AG04450 (cell line): ENCODE measurements at regions of chr12 and their contacts with region 1.

Region 1: GRCh38 chr12:54379401-54380201 is 4.9 kb downstream of the ZNF385A start:
- DNase-seq: peak; percentile 34
- H3K4me3 ChIP-seq: peak overlapping the region; percentile 58
- H3K27ac ChIP-seq: no peak overlapping the region
- H3K27me3 ChIP-seq: no peaks in the 10 kb centered on the region
- CTCF ChIP-seq: peak; percentile 100

Region 2: DNA sequence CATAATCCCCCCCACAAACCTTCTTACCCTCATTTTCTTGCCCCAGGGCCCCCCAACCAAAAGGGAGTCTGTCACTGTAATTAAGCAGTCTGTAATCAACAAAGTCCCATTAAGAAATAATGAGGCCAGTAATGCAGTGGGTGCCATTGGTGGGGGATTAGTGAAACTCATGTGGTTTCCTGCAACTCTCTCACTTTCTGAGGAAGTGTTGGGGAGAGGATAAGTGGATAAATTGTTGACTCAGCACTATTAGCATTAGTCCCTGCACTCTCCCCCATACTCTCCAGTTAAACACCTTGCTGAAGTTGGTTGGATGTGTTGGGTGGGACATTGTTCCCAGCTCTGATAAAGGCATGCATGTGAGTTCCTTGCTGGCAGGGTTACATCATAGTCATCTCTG is 486.8 kb before region 1 on chr12:
- CTCF ChIA-PET with region 1: no interaction called
- POLR2A ChIA-PET with region 1: no interaction called
- DNase-seq: no peak
- H3K4me3 ChIP-seq: no peak overlapping the region
- H3K27ac ChIP-seq: no peak overlapping the region
- H3K27me3 ChIP-seq: peaks cover 2% of the 10 kb centered on the region
- CTCF ChIP-seq: no peak

Region 3: DNA sequence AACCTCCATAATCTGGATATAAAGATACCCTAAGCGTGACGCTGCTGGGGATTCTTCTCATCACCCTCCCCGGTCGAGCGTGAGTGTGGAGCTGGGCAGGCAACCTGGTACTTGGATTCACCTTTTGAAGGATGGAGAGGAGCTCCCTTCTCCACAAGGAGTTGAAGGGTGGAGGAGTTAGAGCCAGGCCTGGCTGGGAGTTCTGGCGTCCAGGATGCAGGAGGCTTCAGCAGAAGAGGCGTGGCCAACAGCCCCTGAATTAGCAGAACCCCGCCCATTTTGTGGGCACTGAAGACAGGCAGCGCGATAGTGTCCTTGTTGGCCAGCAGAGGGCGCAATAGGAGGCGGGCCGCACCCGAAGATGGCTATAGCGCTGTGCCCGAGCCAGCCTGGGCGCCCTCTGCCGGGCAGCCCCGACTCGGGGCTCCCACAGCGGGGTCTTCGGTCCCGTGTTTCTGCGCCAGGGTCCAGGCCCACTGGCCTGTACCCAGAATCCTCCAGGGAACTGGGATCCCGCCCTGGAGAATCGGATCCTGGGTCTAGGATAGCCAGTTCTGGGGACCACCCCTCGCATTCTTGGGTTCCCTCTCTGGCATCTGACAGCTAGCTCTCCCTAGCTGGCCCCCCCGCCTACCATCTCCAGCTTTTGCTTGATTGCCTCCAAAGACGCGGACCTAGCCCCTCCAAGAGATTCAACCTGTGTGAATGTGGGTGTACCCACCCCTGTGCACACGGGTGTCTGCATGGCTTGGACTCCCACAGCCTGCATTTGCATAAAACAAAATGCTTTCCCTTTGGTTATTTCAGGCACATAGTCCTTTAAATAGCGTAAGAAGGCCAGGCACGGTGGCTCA is 164.8 kb before region 1 on chr12:
- CTCF ChIA-PET with region 1: interaction called, 82 read pairs
- POLR2A ChIA-PET with region 1: no interaction called
- DNase-seq: peak; percentile 60
- H3K4me3 ChIP-seq: peak overlapping the region; percentile 39
- H3K27ac ChIP-seq: no peak overlapping the region
- H3K27me3 ChIP-seq: peaks cover 22% of the 10 kb centered on the region
- CTCF ChIP-seq: peak; percentile 94

Region 4: DNA sequence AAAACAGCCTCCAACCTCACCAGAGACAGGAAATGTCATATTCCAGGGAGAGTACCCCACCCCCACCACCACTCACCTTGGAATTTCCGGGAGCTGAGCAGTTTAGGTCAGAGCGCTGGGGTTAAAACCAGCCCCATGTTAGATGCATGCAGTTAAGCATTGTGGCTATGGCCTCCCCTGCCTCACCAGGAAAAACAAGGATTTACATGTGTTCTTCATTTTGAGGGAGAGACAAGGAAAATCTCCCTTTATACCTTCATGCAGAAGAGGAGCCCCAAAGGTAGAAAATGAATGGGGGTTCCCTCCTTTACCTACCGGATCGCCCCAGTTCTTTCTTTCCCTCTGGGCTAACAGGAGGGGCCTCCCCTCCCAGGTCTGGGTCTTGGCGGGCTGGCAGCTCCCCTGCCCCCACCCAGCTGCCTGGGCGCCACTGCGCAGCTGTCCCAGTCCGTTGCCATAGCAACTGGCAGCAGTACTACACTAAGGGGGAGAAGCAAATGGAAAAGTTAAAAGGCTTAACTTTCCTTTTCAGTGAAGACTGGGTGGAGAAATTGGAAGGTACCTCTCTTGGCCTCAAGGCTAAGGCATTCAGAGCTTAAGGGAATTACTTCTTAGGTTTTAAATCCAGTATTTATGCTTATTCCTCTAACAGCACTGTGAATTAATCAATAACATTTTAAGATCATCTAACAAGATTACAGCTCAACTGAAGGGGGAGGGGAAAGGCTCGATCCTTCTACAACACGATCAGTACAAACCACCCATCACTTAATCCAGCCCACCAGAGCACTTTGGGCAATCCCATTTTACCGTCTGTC is 120.2 kb before region 1 on chr12:
- CTCF ChIA-PET with region 1: interaction called, 26 read pairs
- POLR2A ChIA-PET with region 1: no interaction called
- DNase-seq: peak; percentile 63
- H3K4me3 ChIP-seq: peak overlapping the region; percentile 39
- H3K27ac ChIP-seq: peak overlapping the region; percentile 90
- H3K27me3 ChIP-seq: no peaks in the 10 kb centered on the region
- CTCF ChIP-seq: no peak

Region 5: GRCh38 chr12:54294152-54294952 is 85.2 kb before region 1 on chr12:
- CTCF ChIA-PET with region 1: interaction called, 16 read pairs
- POLR2A ChIA-PET with region 1: no interaction called
- DNase-seq: no peak
- H3K4me3 ChIP-seq: no peak overlapping the region
- H3K27ac ChIP-seq: no peak overlapping the region
- H3K27me3 ChIP-seq: peaks cover 13% of the 10 kb centered on the region
- CTCF ChIP-seq: peak; percentile 82

Region 6: GRCh38 chr12:54359033-54359761 is 20.4 kb before region 1 on chr12:
- CTCF ChIA-PET with region 1: interaction called, 24 read pairs
- POLR2A ChIA-PET with region 1: no interaction called
- DNase-seq: peak; percentile 99
- H3K4me3 ChIP-seq: peak overlapping the region; percentile 65
- H3K27ac ChIP-seq: peak overlapping the region; percentile 97
- H3K27me3 ChIP-seq: no peaks in the 10 kb centered on the region
- CTCF ChIP-seq: no peak

Region 7: GRCh38 chr12:54398995-54399793 is 19.6 kb after region 1 on chr12:
- CTCF ChIA-PET with region 1: interaction called, 212 read pairs
- POLR2A ChIA-PET with region 1: no interaction called
- DNase-seq: peak; percentile 61
- H3K4me3 ChIP-seq: no peak overlapping the region
- H3K27ac ChIP-seq: no peak overlapping the region
- H3K27me3 ChIP-seq: no peaks in the 10 kb centered on the region
- CTCF ChIP-seq: peak; percentile 100

Region 8: DNA sequence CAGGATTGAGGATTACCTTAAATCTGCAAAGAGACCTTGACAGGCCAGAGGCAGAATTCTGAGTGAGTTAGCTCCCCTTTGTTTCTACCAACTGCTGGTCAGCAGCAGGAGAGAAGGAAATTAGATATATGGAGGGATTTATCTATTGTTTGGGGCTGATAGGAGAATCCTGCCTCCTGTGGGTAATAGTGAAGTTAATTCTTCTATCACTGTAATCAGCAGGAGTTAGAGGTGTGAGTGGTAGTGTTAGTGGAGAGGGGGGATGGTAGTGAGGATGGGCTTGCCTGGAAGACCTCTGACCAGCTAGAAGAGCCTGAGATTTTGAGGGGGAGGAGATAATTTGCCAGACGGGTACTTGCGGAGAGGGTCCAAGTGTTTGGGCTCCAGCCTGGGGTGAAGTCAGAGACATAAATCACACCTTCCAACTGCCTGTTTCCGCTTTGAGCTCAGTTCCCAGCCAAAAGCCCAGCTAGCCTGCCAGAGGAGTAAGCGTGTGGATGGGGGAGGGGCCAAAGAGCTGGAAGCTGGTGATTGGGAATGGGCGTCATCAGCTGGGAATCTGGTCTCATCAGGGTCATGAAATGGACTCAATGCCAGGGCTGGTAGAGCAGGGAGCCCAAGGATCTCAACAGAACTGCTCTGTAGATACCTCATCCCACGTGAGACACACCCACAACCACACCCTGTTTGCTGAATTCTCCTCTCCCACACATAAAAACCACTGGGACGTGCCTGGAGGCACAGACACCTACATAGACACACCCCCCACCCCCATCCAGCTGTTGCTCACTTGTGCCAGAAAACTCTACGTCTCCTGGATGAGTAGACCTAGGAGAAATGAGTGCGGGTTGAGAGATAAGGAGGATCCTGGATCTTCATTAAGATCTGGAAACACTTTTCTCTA is 52.6 kb after region 1 on chr12:
- CTCF ChIA-PET with region 1: interaction called, 85 read pairs
- POLR2A ChIA-PET with region 1: no interaction called
- DNase-seq: peak; percentile 16
- H3K4me3 ChIP-seq: no peak overlapping the region
- H3K27ac ChIP-seq: no peak overlapping the region
- H3K27me3 ChIP-seq: no peaks in the 10 kb centered on the region
- CTCF ChIP-seq: no peak